ENCODE measurements at regions of chr12 and their contacts with region 1.

Region 1: GRCh38 chr12:105977652-105978051 is 161.1 kb downstream of the NUAK1 start:
- DNase-seq: no peak
- H3K4me3 ChIP-seq: no peak overlapping the region
- H3K27ac ChIP-seq: no peak overlapping the region
- H3K4me1 ChIP-seq: no peaks in the 10 kb centered on the region
- H3K27me3 ChIP-seq: no peaks in the 10 kb centered on the region
- CTCF ChIP-seq: no peak

Region 2: GRCh38 chr12:105721051-105721825 is 256.4 kb before region 1 on chr12:
- intact Hi-C with region 1: no loop called
- DNase-seq: no peak
- H3K4me3 ChIP-seq: no peak overlapping the region
- H3K27ac ChIP-seq: no peak overlapping the region
- H3K4me1 ChIP-seq: peaks cover 0 to 3% of the 10 kb centered on the region in 2 donors
- H3K27me3 ChIP-seq: no peaks in the 10 kb centered on the region
- CTCF ChIP-seq: no peak

Region 3: DNA sequence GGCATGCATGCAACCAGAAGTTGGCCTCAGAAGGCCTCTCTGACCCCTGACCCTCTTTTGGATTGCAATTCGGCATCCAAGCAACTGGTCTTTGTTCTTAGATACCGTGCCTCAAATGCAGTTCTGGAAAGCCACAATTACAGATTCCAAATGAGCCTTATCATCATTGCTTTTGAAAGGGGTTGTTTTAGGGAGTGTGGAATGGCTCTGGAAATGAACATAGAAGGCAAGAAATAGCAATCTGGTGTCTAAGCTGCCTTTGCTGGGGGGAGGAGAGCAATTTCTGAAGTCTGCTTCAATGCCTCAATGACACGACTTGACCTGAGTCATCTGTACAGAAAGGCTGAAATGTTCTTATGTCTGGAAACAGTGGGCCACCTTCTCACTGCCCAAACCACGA is 89.0 kb before region 1 on chr12:
- intact Hi-C with region 1: no loop called
- DNase-seq: no peak
- H3K4me3 ChIP-seq: no peak overlapping the region
- H3K27ac ChIP-seq: no peak overlapping the region
- H3K4me1 ChIP-seq: no peaks in the 10 kb centered on the region
- H3K27me3 ChIP-seq: no peaks in the 10 kb centered on the region
- CTCF ChIP-seq: no peak

Region 4: DNA sequence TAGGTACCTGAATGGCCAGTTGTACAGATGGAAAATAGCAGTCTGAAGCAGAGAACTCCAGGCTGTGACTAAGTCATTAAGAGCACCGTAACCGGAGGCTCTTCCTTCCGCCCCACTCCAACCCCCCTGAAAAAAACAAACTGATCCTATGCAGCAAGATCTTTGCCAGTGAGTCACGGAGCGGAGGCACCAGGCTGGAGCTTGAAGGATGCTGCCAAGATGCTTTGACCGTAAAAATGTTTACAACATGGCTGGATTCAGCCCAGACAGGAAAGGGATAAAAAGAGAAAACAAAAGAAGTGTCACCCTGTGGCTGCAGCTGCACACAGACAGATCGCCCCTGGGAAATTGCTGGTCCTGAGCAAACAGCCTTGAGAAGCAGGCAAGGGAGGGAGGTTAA is 43.4 kb before region 1 on chr12:
- intact Hi-C with region 1: loop called (anchors 5 kb)
- DNase-seq: peak in 1 of 2 donors; percentile 85
- H3K4me3 ChIP-seq: no peak overlapping the region
- H3K27ac ChIP-seq: no peak overlapping the region
- H3K4me1 ChIP-seq: no peaks in the 10 kb centered on the region
- H3K27me3 ChIP-seq: no peaks in the 10 kb centered on the region
- CTCF ChIP-seq: no peak